Ovary (tissue), 10 donors: ENCODE measurements at regions of chr18 and their contacts with region 1.

Region 1: DNA sequence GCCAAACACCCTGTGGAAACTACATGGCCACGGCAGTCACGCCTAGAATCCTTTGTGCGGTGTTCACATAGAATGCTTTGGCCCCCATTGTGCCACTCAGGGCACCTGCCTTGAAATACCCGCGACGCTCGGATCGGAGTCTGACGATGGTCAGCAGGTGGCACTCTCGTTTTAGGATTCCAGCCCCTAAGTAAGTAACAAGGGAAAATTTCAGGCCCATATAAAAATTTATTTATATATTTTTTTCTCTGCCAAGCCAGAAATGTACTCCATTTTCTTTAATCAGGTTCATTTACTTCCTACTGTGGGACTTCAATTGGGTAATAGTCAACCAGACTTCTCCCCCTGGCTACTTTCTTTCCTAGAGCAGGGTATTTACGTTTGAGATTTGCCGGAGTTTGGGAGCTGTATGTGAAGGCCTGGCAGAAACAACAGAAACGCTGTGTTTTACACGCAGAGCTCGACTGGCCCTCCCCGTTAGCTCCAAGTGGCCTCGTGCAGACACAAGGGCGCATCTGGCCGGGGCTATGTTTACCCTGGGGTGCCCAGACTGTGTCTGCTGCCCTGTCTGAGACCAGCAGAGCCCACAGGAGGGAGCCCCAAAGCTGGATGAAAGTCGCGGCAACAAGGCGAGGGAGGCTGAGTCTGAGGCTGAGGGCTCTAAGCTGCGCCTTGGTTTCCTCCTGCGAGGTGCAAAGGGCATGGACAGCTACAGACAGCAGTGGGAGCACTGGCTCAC is 41.6 kb downstream of the LRRC30 start:
- DNase-seq: peak; percentile 39 to 74 (median 61)
- H3K4me3 ChIP-seq: no peak overlapping the region
- H3K27ac ChIP-seq: no peak overlapping the region
- H3K4me1 ChIP-seq: peaks cover 3% of the 10 kb centered on the region
- H3K27me3 ChIP-seq: no peaks in the 10 kb centered on the region
- CTCF ChIP-seq: peak in 1 of 3 donors; percentile 16
- EP300 ChIP-seq: no peak
- POLR2A ChIP-seq: no peak

Region 2: DNA sequence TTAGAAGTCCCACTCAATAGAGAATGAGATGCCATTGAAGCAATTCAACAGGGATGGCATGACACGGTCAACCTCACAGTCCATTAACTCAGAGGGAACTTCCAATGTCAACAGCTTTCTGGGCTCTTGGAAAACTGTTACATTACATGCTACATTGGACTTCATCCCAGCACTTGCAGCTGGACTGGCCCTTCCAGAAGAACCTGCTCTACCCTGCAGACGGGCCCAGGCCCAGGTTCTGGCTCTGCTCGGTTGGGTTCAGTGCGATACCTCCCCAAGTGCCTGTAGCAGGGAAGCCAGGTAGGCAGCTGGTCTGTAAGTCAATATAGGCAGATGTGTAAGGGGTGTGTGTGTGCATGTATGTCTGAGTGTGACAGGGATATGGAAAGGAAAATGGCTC is 167.8 kb before region 1 on chr18:
- intact Hi-C with region 1: no loop called
- DNase-seq: no peak
- H3K4me3 ChIP-seq: no peak overlapping the region
- H3K27ac ChIP-seq: no peak overlapping the region
- H3K4me1 ChIP-seq: no peaks in the 10 kb centered on the region
- H3K27me3 ChIP-seq: no peaks in the 10 kb centered on the region
- CTCF ChIP-seq: no peak
- EP300 ChIP-seq: no peak
- POLR2A ChIP-seq: no peak

Region 3: DNA sequence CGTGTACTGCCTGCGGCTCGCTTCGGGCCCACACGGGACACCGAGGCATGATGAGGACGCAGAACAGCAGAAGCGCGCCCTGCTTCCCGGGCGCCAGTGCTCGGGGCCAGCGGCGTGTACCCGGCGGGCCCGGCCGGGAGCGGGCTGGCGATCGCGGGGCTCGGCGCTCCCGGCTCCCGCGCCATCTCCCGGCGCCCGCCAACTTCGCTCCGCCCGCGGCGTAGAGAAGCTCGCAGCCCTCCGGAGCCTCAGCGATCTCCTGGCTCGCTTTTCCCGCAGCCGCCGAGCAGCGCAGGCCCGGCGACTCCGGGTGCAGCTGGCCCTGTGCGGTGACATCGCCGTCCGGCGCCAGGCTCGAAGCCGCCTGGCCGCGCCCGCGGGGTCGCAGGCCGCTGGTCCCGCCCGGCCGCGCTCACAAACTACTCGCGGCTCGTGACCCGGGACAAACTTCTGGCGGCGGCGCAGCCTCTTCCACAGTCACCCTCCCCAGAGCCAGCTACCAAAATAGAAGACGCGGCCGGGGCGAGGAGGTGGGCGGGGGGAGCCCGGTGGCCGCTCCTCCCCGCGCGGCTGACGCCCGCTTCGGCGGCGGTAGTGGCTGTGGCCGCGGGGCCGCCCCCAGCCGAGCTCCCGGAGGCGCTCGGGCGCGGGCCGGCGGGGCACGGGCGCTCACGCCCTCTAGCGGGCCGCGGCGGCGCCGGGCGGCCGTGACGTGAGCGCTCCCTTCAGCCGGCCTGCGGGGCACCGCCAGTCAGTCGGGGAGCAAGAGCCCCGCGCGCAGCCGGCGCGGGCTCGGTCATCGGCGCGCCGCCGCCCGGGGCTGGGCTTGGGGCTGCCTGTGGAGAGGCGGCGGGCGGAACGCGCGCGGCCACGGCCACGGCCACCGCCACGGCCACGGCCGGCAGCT is 294.3 kb after region 1 on chr18 and contains the start of gene PTPRM:
- intact Hi-C with region 1: loop called in 3 of 4 experiments (anchors 2 to 10 kb)
- DNase-seq: peak; percentile 78 to 88 (median 86)
- H3K4me3 ChIP-seq: peak within 1 kb of the TSS; percentile 60
- H3K27ac ChIP-seq: peak within 1 kb of the TSS; percentile 94 to 97
- H3K4me1 ChIP-seq: peaks cover 7% of the 10 kb centered on the region
- H3K27me3 ChIP-seq: no peaks in the 10 kb centered on the region
- CTCF ChIP-seq: peak in 2 of 3 donors; percentile 62 to 76
- EP300 ChIP-seq: no peak
- POLR2A ChIP-seq: peak; percentile 61
- total RNA-seq, gene PTPRM: 45.6 to 73.3 (median 56.9) TPM

Region 4: GRCh38 chr18:8400296-8400695 is 1127.8 kb after region 1 on chr18:
- intact Hi-C with region 1: loop called in 1 of 4 experiments (anchors 10 kb)
- DNase-seq: no peak
- H3K4me3 ChIP-seq: no peak overlapping the region
- H3K27ac ChIP-seq: no peak overlapping the region
- H3K4me1 ChIP-seq: no peaks in the 10 kb centered on the region
- H3K27me3 ChIP-seq: no peaks in the 10 kb centered on the region
- CTCF ChIP-seq: no peak
- EP300 ChIP-seq: no peak
- POLR2A ChIP-seq: no peak

Region 5: GRCh38 chr18:8478166-8478967 is 1205.9 kb after region 1 on chr18:
- intact Hi-C with region 1: loop called in 2 of 4 experiments (anchors 5 kb)
- DNase-seq: peak; percentile 28 to 68 (median 47)
- H3K4me3 ChIP-seq: no peak overlapping the region
- H3K27ac ChIP-seq: no peak overlapping the region
- H3K4me1 ChIP-seq: no peaks in the 10 kb centered on the region
- H3K27me3 ChIP-seq: no peaks in the 10 kb centered on the region
- CTCF ChIP-seq: peak in 2 of 3 donors; percentile 22 to 40
- EP300 ChIP-seq: no peak
- POLR2A ChIP-seq: no peak